Pancreas (tissue), 10 donors: ENCODE measurements at regions of chr15 and their contacts with region 1.

Region 1: DNA sequence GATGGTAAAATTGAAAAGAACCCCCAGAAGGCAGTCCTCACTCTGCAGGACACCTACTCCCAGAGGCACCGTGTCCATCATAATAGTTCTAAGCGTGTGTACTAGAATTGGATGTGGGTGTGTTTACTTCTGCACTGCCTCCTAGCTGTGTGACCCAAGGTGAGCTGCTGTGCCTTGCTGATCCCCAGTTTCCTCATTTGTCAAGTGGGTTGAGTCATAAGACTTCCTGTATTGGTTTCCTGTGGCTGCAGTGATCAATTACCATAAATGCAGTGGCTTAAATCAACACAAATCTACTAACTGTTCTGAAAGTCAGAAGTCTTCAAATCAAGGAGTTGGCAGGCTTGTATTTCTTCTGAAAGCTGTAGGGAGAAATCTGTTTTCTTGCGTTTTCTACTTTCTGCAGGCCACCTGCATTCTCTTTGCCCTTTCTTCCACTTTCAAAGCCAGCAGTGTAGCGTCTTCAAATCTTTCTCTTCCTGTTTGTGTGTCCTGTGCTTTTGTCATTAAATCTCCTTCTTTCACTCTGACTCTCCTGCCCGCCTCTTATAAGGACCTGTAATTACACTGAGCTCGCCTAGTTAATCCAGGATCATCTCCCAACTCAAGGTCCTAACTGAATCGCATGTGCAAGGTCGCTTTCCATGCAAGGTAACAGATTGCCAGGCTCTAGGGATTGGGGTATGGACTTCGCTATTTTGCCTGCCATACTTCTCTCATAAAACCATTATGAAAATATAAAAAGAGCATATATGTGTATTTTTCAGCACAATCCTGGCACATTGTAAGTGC is 59.0 kb downstream of the RORA start:
- DNase-seq: no peak
- ATAC-seq: no peak
- H3K4me3 ChIP-seq: no peak overlapping the region
- H3K27ac ChIP-seq: no peak overlapping the region
- H3K4me1 ChIP-seq: no peaks in the 10 kb centered on the region
- H3K27me3 ChIP-seq: no peaks in the 10 kb centered on the region
- CTCF ChIP-seq: no peak

Region 2: DNA sequence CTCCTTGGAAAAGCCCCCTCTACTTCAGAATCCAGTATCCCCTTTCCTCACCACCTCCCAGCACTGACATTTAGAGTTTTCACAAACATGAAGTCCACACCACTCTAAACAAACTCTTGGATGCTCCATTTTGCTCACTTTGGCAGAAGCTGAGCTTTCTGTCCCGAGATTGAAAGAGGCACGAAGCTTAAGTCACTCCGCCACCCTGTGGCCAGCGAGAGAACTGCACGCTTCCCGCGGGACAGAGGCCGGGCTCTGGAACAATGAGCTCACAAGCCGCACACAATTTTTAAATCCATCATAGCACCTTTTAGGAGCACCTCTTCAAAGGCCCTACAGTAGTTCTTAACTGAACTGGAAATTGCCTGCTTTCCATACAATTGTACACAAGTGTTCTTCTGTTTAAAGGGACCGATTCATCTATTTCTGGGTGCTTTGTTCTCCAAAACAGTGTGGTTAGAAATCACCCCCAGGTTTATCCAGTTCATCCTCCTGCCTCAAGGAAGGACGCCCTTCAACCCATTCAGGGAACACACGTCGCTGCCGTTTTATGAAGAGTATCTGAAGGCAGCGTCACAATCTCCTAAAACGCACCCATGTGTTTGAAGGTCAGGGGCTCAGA is 664.1 kb after region 1 on chr15:
- intact Hi-C with region 1: loop called in 1 of 3 experiments (anchors 10 kb)
- DNase-seq: peak; percentile 58 to 96 (median 82)
- ATAC-seq: peak; percentile 84 to 94 (median 91)
- H3K4me3 ChIP-seq: no peak overlapping the region
- H3K27ac ChIP-seq: no peak overlapping the region
- H3K4me1 ChIP-seq: no peaks in the 10 kb centered on the region
- H3K27me3 ChIP-seq: no peaks in the 10 kb centered on the region
- CTCF ChIP-seq: peak; percentile 91 to 99 (median 95)